Activated naive CD4-positive, alpha-beta T cell treated with anti-CD3 and anti-CD28 coated beads for 36 hours (primary cell): ENCODE measurements at regions of chr6 and their contacts with region 1.

Region 1: GRCh38 chr6:128029826-128030225 is 129.0 kb upstream of the THEMIS start:
- DNase-seq: no peak
- H3K4me3 Mint-ChIP-seq: no peak overlapping the region
- H3K27ac Mint-ChIP-seq: no peak overlapping the region
- H3K4me1 Mint-ChIP-seq: peaks cover 23% of the 10 kb centered on the region
- H3K27me3 Mint-ChIP-seq: no peaks in the 10 kb centered on the region

Region 2: GRCh38 chr6:128007658-128008057 is 22.2 kb before region 1 on chr6:
- CTCF ChIA-PET with region 1: no interaction called
- intact Hi-C with region 1: loop called (anchors 2 kb)
- DNase-seq: no peak
- H3K4me3 Mint-ChIP-seq: no peak overlapping the region
- H3K27ac Mint-ChIP-seq: no peak overlapping the region
- H3K4me1 Mint-ChIP-seq: peaks cover 2% of the 10 kb centered on the region
- H3K27me3 Mint-ChIP-seq: no peaks in the 10 kb centered on the region